Naive thymus-derived CD4-positive, alpha-beta T cell (primary cell): ENCODE measurements at regions of chr1 and their contacts with region 1.

Region 1: DNA sequence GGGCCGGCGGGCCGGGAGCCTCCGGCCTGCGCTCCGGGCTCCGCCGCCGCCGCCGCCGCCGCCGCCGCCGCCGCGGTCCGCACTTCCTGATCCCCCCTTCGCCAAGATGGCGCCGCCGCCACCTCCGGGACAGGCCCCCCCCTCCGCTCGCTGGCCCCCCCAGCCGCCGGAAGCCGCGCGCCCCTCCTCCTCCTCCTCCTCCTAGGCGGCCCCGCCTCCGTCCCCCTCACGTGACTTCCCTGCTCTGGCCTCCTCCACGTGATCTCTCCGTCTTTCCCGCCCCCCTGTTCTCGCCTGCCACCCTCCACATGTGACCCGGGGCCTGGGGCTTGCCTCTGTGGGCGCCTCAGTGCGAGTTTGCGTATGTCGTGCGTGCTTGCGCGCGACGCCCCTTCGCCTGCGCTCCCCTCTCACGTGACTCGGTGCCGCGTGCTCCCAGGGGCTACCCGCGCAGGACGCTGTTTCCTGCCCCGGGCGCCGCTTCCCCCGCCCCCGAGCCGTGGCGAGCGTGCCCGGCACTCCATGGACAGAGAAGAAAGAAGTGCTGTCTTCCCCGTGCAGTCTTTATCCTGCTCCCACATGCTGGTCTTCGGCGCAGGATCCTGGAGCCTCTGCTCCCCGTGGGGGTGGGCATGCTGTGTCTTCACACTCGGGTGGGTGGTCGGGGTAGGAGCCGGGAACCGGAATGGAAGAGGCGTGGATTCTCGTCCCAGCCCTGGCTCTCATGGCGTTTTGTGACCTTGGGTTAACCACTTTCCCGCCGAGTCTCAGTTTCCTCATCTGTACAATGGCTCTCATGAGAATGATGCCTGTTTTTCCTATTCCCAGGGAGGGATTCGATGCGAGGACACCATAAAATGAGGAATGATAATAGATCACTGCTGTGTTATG is at the start of gene UBE2Q1:
- DNase-seq: peak; percentile 92 to 100 (median 100)
- ATAC-seq: peak; percentile 94
- H3K4me3 ChIP-seq: peak within 1 kb of the TSS; percentile 81
- H3K4me3 Mint-ChIP-seq: peak within 1 kb of the TSS; percentile 89 to 98 (median 96)
- H3K27ac ChIP-seq: peak within 1 kb of the TSS; percentile 86
- H3K27ac Mint-ChIP-seq: peak within 1 kb of the TSS; percentile 90 to 97 (median 94)
- H3K4me1 ChIP-seq: peaks cover 18 to 23% of the 10 kb centered on the region in 2 donors
- H3K4me1 Mint-ChIP-seq: peaks cover 12 to 45% (median 39%) of the 10 kb centered on the region in 7 donors
- H3K27me3 ChIP-seq: no peaks in the 10 kb centered on the region
- H3K27me3 Mint-ChIP-seq: peaks cover 0 to 2% (median 0%) of the 10 kb centered on the region in 5 donors
- total RNA-seq, gene UBE2Q1: 63.2 to 117 (median 106) TPM

Region 2: DNA sequence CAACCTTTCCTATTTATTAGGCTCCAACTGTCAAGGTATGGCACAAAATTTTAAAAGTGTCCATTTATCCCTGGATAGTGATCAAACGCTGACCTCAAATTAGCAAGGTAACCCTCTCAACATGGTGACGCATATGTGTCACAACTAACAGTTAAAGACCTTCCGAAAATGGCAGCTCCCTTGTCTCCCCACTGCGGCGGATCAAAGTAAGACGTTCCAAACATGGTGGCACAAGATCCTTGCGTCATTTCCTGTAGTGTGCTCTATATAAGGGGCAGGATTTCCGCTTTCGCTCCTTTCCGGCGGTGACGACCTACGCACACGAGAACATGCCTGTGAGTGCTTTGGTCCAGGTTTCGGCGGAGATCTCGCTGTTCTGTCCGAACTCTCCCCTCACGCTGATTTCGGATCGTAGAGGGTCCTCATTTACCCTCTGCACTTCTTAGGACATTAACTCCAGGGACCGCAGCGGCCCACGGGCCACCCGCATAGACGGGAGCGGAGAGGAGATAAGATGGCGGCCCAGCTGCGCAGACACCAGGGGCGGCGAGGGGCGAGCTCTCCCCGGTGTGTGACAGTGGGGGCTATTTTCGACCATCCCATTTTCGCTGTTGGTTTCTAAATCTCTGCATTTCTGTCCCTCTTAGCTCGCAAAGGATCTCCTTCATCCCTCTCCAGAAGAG is 568.2 kb before region 1 on chr1 and contains the start of gene RPS27:
- CTCF ChIA-PET with region 1: no interaction called
- POLR2A ChIA-PET with region 1: interaction called, 3 read pairs
- intact Hi-C with region 1: loop called in 1 of 2 experiments (anchors 1 kb)
- DNase-seq: peak; percentile 76 to 97 (median 92)
- ATAC-seq: peak; percentile 90
- H3K4me3 ChIP-seq: peak within 1 kb of the TSS; percentile 82
- H3K4me3 Mint-ChIP-seq: peak within 1 kb of the TSS; percentile 83 to 99 (median 96)
- H3K27ac ChIP-seq: peak within 1 kb of the TSS; percentile 99
- H3K27ac Mint-ChIP-seq: peak within 1 kb of the TSS; percentile 92 to 100 (median 99)
- H3K4me1 ChIP-seq: peaks cover 26 to 34% of the 10 kb centered on the region in 2 donors
- H3K4me1 Mint-ChIP-seq: peaks cover 32 to 62% (median 44%) of the 10 kb centered on the region in 7 donors
- H3K27me3 ChIP-seq: no peaks in the 10 kb centered on the region
- H3K27me3 Mint-ChIP-seq: peaks cover 2 to 8% (median 4%) of the 10 kb centered on the region in 5 donors
- total RNA-seq, gene RPS27: 2,313 to 8,530 (median 5,699) TPM

Region 3: GRCh38 chr1:154335025-154335714 is 223.7 kb before region 1 on chr1:
- CTCF ChIA-PET with region 1: no interaction called
- POLR2A ChIA-PET with region 1: no interaction called
- intact Hi-C with region 1: no loop called
- DNase-seq: peak; percentile 74 to 91 (median 87)
- ATAC-seq: peak; percentile 99
- H3K4me3 ChIP-seq: peak overlapping the region; percentile 23
- H3K4me3 Mint-ChIP-seq: peak overlapping the region; percentile 60 to 85 (median 72)
- H3K27ac ChIP-seq: peak overlapping the region; percentile 68
- H3K27ac Mint-ChIP-seq: peak overlapping the region; percentile 87 to 97 (median 95)
- H3K4me1 ChIP-seq: peaks cover 73% of the 10 kb centered on the region in 2 donors
- H3K4me1 Mint-ChIP-seq: peaks cover 50 to 88% (median 77%) of the 10 kb centered on the region in 7 donors
- H3K27me3 ChIP-seq: no peaks in the 10 kb centered on the region
- H3K27me3 Mint-ChIP-seq: no peaks in the 10 kb centered on the region

Region 4: GRCh38 chr1:154352581-154353459 is 206.0 kb before region 1 on chr1:
- CTCF ChIA-PET with region 1: interaction called, 3 read pairs
- POLR2A ChIA-PET with region 1: no interaction called
- intact Hi-C with region 1: loop called (anchors 5 kb)
- DNase-seq: peak in 8 of 9 donors; percentile 45 to 58 (median 52)
- ATAC-seq: peak; percentile 84
- H3K4me3 ChIP-seq: peak overlapping the region; percentile 79
- H3K4me3 Mint-ChIP-seq: peak overlapping the region; percentile 76 to 98 (median 91)
- H3K27ac ChIP-seq: peak overlapping the region; percentile 74
- H3K27ac Mint-ChIP-seq: peak overlapping the region; percentile 66 to 97 (median 88)
- H3K4me1 ChIP-seq: peaks cover 13 to 32% of the 10 kb centered on the region in 2 donors
- H3K4me1 Mint-ChIP-seq: peaks cover 29 to 64% (median 48%) of the 10 kb centered on the region in 7 donors
- H3K27me3 ChIP-seq: no peaks in the 10 kb centered on the region
- H3K27me3 Mint-ChIP-seq: peaks cover 0 to 2% (median 0%) of the 10 kb centered on the region in 5 donors

Region 5: DNA sequence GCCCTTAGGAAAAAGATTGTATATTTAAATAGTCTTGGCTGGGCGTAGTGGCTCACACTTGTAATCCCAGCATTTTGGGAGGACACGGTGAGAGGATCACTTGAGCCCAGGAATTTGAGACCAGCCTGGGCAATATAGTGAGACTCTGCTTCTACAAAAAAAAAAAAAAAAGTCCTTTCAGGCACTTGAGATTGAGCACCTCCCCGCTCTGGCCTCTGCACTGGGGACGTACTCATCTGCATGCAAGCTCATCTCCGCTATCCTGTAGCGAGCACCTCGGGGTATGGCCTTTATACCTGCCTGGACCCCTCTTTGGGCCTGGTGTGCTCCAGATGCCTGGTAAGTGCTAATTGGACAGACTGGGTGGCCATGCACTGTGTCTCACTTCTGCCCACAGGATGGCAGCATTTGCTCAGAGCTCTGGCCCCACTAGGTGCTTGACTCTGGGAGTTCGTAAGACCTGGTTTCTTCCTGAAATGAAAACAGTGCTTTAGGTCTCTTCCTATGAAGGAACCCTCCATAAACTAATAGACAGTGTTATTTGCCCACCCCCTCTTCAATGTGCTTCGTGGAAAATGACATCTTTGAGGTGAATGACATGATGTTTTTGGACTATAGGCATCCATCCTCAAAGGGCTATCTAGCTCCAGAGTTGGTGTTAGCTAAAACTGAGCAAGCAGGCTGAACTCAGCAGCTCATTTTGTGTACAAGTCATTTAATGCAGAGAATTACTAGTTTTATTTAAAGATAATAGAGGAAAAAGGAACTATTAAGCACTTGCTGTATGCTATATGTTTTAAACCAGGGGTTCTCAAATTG is 110.9 kb after region 1 on chr1:
- CTCF ChIA-PET with region 1: interaction called, 10 read pairs
- POLR2A ChIA-PET with region 1: interaction called, 8 read pairs
- intact Hi-C with region 1: loop called (anchors 1 kb)
- DNase-seq: peak; percentile 40 to 81 (median 73)
- ATAC-seq: peak; percentile 100
- H3K4me3 ChIP-seq: no peak overlapping the region
- H3K4me3 Mint-ChIP-seq: no peak overlapping the region
- H3K27ac ChIP-seq: no peak overlapping the region
- H3K27ac Mint-ChIP-seq: peak overlapping the region in 1 of 9 donors; percentile 30
- H3K4me1 ChIP-seq: no peaks in the 10 kb centered on the region
- H3K4me1 Mint-ChIP-seq: peaks cover 0 to 13% (median 5%) of the 10 kb centered on the region in 7 donors
- H3K27me3 ChIP-seq: no peaks in the 10 kb centered on the region
- H3K27me3 Mint-ChIP-seq: peaks cover 0 to 4% (median 0%) of the 10 kb centered on the region in 5 donors

Region 6: GRCh38 chr1:154878371-154879022 is 319.7 kb after region 1 on chr1:
- CTCF ChIA-PET with region 1: interaction called, 15 read pairs
- POLR2A ChIA-PET with region 1: interaction called, 3 read pairs
- intact Hi-C with region 1: loop called (anchors 1 kb)
- DNase-seq: peak; percentile 43 to 73 (median 60)
- ATAC-seq: peak; percentile 94
- H3K4me3 ChIP-seq: no peak overlapping the region
- H3K4me3 Mint-ChIP-seq: no peak overlapping the region
- H3K27ac ChIP-seq: no peak overlapping the region
- H3K27ac Mint-ChIP-seq: peak overlapping the region in 1 of 9 donors; percentile 56
- H3K4me1 ChIP-seq: no peaks in the 10 kb centered on the region
- H3K4me1 Mint-ChIP-seq: peaks cover 0 to 8% (median 0%) of the 10 kb centered on the region in 7 donors
- H3K27me3 ChIP-seq: no peaks in the 10 kb centered on the region
- H3K27me3 Mint-ChIP-seq: peaks cover 0 to 2% (median 0%) of the 10 kb centered on the region in 5 donors

Region 7: GRCh38 chr1:155001675-155002463 is 443.0 kb after region 1 on chr1:
- CTCF ChIA-PET with region 1: interaction called, 3 read pairs
- POLR2A ChIA-PET with region 1: no interaction called
- intact Hi-C with region 1: loop called (anchors 1 kb)
- DNase-seq: peak; percentile 90 to 98 (median 95)
- ATAC-seq: peak; percentile 87
- H3K4me3 ChIP-seq: peak overlapping the region; percentile 95
- H3K4me3 Mint-ChIP-seq: peak overlapping the region; percentile 90 to 100 (median 95)
- H3K27ac ChIP-seq: peak overlapping the region; percentile 88
- H3K27ac Mint-ChIP-seq: peak overlapping the region; percentile 70 to 99 (median 91)
- H3K4me1 ChIP-seq: peaks cover 23 to 40% of the 10 kb centered on the region in 2 donors
- H3K4me1 Mint-ChIP-seq: peaks cover 29 to 63% (median 55%) of the 10 kb centered on the region in 7 donors
- H3K27me3 ChIP-seq: no peaks in the 10 kb centered on the region
- H3K27me3 Mint-ChIP-seq: no peaks in the 10 kb centered on the region

Region 8: GRCh38 chr1:155172732-155173477 is 614.1 kb after region 1 on chr1 and contains the start of gene KRTCAP2:
- CTCF ChIA-PET with region 1: no interaction called
- POLR2A ChIA-PET with region 1: no interaction called
- intact Hi-C with region 1: loop called (anchors 2 kb)
- DNase-seq: peak; percentile 89 to 93 (median 92)
- ATAC-seq: peak; percentile 91
- H3K4me3 ChIP-seq: peak within 1 kb of the TSS; percentile 90
- H3K4me3 Mint-ChIP-seq: peak within 1 kb of the TSS; percentile 94 to 100 (median 98)
- H3K27ac ChIP-seq: peak within 1 kb of the TSS; percentile 88
- H3K27ac Mint-ChIP-seq: peak within 1 kb of the TSS; percentile 95 to 99 (median 98)
- H3K4me1 ChIP-seq: peaks cover 11 to 18% of the 10 kb centered on the region in 2 donors
- H3K4me1 Mint-ChIP-seq: peaks cover 32 to 60% (median 47%) of the 10 kb centered on the region in 7 donors
- H3K27me3 ChIP-seq: no peaks in the 10 kb centered on the region
- H3K27me3 Mint-ChIP-seq: peaks cover 0 to 6% (median 0%) of the 10 kb centered on the region in 5 donors
- total RNA-seq, gene KRTCAP2: 97.4 to 236 (median 155) TPM